Mammary epithelial cell (primary cell): ENCODE measurements at regions of chr7 and their contacts with region 1.

Region 1: GRCh38 chr7:116173051-116174028 is 37.0 kb upstream of the TES start:
- DNase-seq: peak; percentile 54
- H3K4me3 ChIP-seq: no peak overlapping the region
- H3K27ac ChIP-seq: no peak overlapping the region
- H3K4me1 ChIP-seq: peaks cover 25% of the 10 kb centered on the region
- H3K27me3 ChIP-seq: no peaks in the 10 kb centered on the region
- CTCF ChIP-seq: peak; percentile 35 to 46

Region 2: DNA sequence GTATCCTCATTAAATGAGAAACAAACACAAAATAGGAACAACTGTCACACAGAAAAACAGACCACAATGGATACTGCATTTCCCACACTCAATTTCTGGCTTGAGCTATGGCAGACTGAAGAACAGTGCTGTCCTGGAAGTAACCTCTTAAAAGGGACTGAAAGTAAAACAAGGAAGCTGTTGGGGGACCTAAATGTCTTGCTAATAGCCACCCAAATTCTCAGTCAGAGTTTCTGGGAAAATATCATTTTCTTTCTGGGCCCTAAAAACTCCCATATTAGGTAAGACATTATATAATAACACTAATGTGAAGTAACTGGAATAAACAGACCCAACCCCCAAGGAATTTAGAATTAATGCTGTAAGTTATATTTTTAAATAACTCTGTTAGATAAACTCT is 61.9 kb before region 1 on chr7:
- CTCF ChIA-PET with region 1: no interaction called
- dilution Hi-C with region 1: no loop called
- in situ Hi-C with region 1: no loop called
- intact Hi-C with region 1: no loop called
- DNase-seq: no peak
- H3K4me3 ChIP-seq: no peak overlapping the region
- H3K27ac ChIP-seq: peak overlapping the region; percentile 35
- H3K4me1 ChIP-seq: peaks cover 11% of the 10 kb centered on the region
- H3K27me3 ChIP-seq: no peaks in the 10 kb centered on the region
- CTCF ChIP-seq: no peak

Region 3: DNA sequence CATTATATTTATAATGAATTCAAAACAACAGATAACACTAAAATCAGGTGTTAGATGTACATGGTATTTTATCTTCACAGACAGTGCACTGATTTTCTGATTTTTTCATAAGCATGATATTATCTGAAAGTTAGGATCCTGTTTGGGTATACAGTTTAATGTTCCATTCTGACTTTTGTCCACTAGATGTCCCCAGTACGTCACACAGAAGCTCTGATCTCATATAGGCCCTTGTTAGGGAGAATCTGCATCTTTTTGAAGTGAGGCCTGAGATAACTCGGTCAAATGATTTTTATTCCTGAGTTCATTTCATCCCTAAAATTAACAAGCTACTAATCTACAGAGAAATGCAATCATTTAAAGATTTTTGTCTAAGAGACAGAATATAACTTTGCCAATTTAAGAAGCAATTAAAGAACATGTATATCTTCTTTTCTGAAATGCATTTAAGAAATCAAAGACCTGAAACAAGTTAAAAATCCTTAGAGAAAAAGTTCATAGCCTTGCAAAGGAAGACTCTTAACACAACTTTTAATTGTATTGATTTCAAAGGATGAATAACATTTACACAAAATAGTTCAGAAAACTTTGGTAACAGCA is 35.0 kb before region 1 on chr7:
- CTCF ChIA-PET with region 1: interaction called, 5 read pairs
- dilution Hi-C with region 1: no loop called
- in situ Hi-C with region 1: no loop called
- intact Hi-C with region 1: loop called (anchors 1 kb)
- DNase-seq: peak; percentile 69
- H3K4me3 ChIP-seq: no peak overlapping the region
- H3K27ac ChIP-seq: peak overlapping the region; percentile 61
- H3K4me1 ChIP-seq: peaks cover 21% of the 10 kb centered on the region
- H3K27me3 ChIP-seq: no peaks in the 10 kb centered on the region
- CTCF ChIP-seq: peak; percentile 82 to 85

Region 4: GRCh38 chr7:116218051-116218645 is 44.8 kb after region 1 on chr7:
- CTCF ChIA-PET with region 1: no interaction called
- dilution Hi-C with region 1: no loop called
- in situ Hi-C with region 1: no loop called
- intact Hi-C with region 1: no loop called
- DNase-seq: peak; percentile 73
- H3K4me3 ChIP-seq: no peak overlapping the region
- H3K27ac ChIP-seq: peak overlapping the region; percentile 93
- H3K4me1 ChIP-seq: peaks cover 52% of the 10 kb centered on the region
- H3K27me3 ChIP-seq: no peaks in the 10 kb centered on the region
- CTCF ChIP-seq: no peak

Region 5: DNA sequence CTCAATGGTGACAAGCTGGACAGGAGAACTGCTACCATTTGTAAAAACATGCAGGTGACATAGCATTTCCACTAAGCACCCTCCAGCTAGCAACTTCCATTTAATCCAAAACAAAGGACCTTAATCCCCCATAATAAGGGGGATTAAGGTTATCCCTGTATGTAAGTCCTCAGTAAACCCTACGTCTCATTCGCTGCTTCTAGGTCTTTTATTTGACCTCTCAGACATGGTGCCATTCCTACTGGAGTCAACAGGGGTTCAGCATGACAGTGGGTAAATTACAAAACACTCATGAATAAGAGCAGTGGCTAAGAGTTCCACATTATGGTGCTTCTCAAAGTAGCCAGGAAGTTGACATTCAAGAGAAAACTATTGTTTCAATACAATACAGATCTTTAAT is 204.4 kb after region 1 on chr7:
- CTCF ChIA-PET with region 1: no interaction called
- dilution Hi-C with region 1: no loop called
- in situ Hi-C with region 1: no loop called
- intact Hi-C with region 1: no loop called
- DNase-seq: no peak
- H3K4me3 ChIP-seq: no peak overlapping the region
- H3K27ac ChIP-seq: no peak overlapping the region
- H3K4me1 ChIP-seq: no peaks in the 10 kb centered on the region
- H3K27me3 ChIP-seq: no peaks in the 10 kb centered on the region
- CTCF ChIP-seq: no peak

Region 6: GRCh38 chr7:116455009-116455408 is 281.7 kb after region 1 on chr7:
- CTCF ChIA-PET with region 1: no interaction called
- dilution Hi-C with region 1: no loop called
- in situ Hi-C with region 1: no loop called
- intact Hi-C with region 1: no loop called
- DNase-seq: peak; percentile 52
- H3K4me3 ChIP-seq: no peak overlapping the region
- H3K27ac ChIP-seq: peak overlapping the region; percentile 4
- H3K4me1 ChIP-seq: peaks cover 12% of the 10 kb centered on the region
- H3K27me3 ChIP-seq: no peaks in the 10 kb centered on the region
- CTCF ChIP-seq: no peak

Region 7: DNA sequence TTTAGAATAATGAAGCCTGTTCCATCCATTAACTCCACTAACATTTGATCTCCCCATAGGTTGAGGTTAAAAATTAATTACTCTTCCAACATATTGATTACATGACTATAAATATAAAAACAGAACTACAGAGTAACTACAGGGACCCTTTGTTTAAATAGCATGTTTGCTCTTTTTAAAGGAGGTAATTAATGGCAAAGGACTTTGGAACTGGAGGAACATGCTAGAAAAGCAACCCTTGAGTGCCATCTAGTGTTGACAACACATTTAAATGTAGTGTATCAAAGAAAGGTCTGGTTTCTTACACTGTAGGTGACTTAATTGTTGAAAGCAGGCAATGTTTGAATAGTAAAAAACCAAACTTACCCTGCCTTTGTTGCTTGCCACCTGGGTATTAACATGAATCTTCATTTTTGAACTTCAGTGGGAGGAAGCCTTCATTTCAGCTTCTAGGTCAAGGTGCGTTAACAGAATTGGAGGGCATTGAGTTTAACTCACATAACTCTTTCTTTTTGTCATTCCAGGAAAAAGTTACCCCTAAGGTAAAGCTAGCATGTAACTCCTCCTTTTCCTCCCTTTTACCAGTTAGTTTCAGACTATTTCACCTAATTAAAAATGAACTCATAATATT is 636.4 kb after region 1 on chr7:
- CTCF ChIA-PET with region 1: no interaction called
- dilution Hi-C with region 1: loop called (anchors 10 kb)
- in situ Hi-C with region 1: loop called (anchors 10 to 25 kb)
- intact Hi-C with region 1: loop called (anchors 1 kb)
- DNase-seq: peak; percentile 56
- H3K4me3 ChIP-seq: no peak overlapping the region
- H3K27ac ChIP-seq: no peak overlapping the region
- H3K4me1 ChIP-seq: peaks cover 3% of the 10 kb centered on the region
- H3K27me3 ChIP-seq: no peaks in the 10 kb centered on the region
- CTCF ChIP-seq: peak; percentile 45 to 65

Region 8: DNA sequence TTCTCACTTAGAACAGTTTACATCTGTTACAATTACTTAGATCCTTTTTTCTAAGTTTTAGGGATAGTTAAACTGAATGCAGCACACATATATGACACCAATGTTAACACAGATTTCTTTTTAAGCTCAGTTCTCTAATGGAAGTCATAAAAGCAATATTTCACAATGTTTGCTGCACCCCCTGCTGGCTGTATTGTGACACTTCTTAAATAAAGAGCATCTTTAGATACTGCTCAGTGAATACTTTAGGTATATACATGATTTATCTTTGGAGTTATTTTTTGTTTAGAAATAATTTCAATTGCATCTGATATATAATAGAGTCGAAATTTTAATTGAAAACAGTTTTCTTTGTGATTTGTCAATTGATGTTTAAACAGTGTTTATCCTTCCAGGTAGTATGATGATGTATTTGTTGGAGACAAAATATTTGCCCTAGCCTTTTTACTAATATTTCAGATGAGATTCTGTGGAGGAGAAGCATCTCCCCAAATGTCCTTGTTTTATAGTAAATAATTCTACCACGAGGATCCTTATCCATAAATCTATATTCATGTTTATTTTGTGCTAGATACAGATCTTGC is 954.3 kb after region 1 on chr7:
- CTCF ChIA-PET with region 1: interaction called, 5 read pairs
- dilution Hi-C with region 1: no loop called
- in situ Hi-C with region 1: loop called in 1 of 2 experiments (anchors 25 kb)
- intact Hi-C with region 1: loop called (anchors 2 kb)
- DNase-seq: peak; percentile 31
- H3K4me3 ChIP-seq: no peak overlapping the region
- H3K27ac ChIP-seq: no peak overlapping the region
- H3K4me1 ChIP-seq: peaks cover 28% of the 10 kb centered on the region
- H3K27me3 ChIP-seq: no peaks in the 10 kb centered on the region
- CTCF ChIP-seq: peak; percentile 73